PC-9 (cell line): ENCODE measurements at regions of chr3 and their contacts with region 1.

Region 1: GRCh38 chr3:112794622-112795172 is 52.0 kb downstream of the CD200R1L start:
- DNase-seq: no peak
- H3K4me3 ChIP-seq: no peak overlapping the region
- H3K27ac ChIP-seq: no peak overlapping the region
- H3K4me1 ChIP-seq: peaks cover 20% of the 10 kb centered on the region
- H3K27me3 ChIP-seq: no peaks in the 10 kb centered on the region
- CTCF ChIP-seq: no peak

Region 2: DNA sequence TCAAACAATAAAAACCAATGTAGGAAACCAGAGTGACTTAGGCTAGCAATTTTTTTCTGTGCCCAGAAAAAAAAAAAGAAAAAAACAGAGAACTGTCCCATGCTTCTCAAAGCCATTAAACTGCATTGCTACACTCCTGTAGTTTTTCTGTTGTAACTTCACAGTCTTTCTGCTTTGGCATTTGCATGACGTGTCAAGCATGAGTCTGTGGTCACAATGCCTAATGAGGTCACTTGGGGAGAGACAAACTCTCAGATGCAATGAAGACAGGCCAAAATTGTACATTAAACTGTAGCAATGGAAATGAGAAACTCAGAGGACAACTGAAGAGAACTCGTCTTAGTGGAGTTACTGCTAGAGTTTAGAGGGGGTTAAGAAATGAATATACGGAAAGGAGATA is 184.6 kb before region 1 on chr3:
- CTCF ChIA-PET with region 1: no interaction called
- POLR2A ChIA-PET with region 1: interaction called, 10 read pairs
- intact Hi-C with region 1: no loop called
- DNase-seq: no peak
- H3K4me3 ChIP-seq: no peak overlapping the region
- H3K27ac ChIP-seq: no peak overlapping the region
- H3K4me1 ChIP-seq: peaks cover 1% of the 10 kb centered on the region; the same call in 1 of the 2 replicates
- H3K27me3 ChIP-seq: no peaks in the 10 kb centered on the region
- CTCF ChIP-seq: no peak

Region 3: DNA sequence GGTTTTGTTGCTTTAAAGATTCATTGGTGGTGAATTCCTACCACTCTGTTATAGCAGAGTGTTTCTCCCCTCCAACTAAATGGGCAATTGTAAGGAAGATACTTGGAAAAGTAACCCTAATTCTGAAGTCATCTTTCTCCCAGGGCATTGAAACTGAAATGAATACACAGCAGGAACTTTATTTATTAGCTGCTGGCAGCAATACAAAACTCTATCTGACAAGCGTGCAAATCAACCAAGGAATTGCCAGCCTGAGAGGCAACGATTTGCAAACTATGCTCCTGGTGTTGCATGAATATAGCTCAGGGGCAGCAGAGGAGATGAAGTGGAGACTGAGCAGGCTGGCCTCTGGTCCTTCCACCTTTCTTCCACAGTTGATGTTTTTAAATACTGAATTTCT is 131.3 kb after region 1 on chr3:
- CTCF ChIA-PET with region 1: no interaction called
- POLR2A ChIA-PET with region 1: no interaction called
- intact Hi-C with region 1: no loop called
- DNase-seq: no peak
- H3K4me3 ChIP-seq: no peak overlapping the region
- H3K27ac ChIP-seq: no peak overlapping the region
- H3K4me1 ChIP-seq: no peaks in the 10 kb centered on the region
- H3K27me3 ChIP-seq: no peaks in the 10 kb centered on the region
- CTCF ChIP-seq: no peak